ENCODE measurements at regions of chr11 and their contacts with region 1.

Region 1: GRCh38 chr11:7986768-7987559 is at the start of gene EIF3F:
- DNase-seq: peak; percentile 94
- H3K4me3 Mint-ChIP-seq: peak within 1 kb of the TSS; percentile 88
- H3K27ac Mint-ChIP-seq: peak within 1 kb of the TSS; percentile 92
- H3K4me1 Mint-ChIP-seq: peaks cover 37% of the 10 kb centered on the region
- H3K27me3 Mint-ChIP-seq: no peaks in the 10 kb centered on the region
- total RNA-seq, gene EIF3F: 365 to 380 TPM

Region 2: GRCh38 chr11:7098235-7098832 is 888.6 kb before region 1 on chr11:
- CTCF ChIA-PET with region 1: no interaction called
- intact Hi-C with region 1: loop called (anchors 2 kb)
- DNase-seq: no peak
- H3K4me3 Mint-ChIP-seq: no peak overlapping the region
- H3K27ac Mint-ChIP-seq: no peak overlapping the region
- H3K4me1 Mint-ChIP-seq: no peaks in the 10 kb centered on the region
- H3K27me3 Mint-ChIP-seq: peaks cover 11% of the 10 kb centered on the region

Region 3: GRCh38 chr11:7688238-7688826 is 298.6 kb before region 1 on chr11:
- CTCF ChIA-PET with region 1: interaction called, 3 read pairs
- intact Hi-C with region 1: loop called (anchors 5 kb)
- DNase-seq: peak; percentile 35
- H3K4me3 Mint-ChIP-seq: no peak overlapping the region
- H3K27ac Mint-ChIP-seq: no peak overlapping the region
- H3K4me1 Mint-ChIP-seq: peaks cover 6% of the 10 kb centered on the region
- H3K27me3 Mint-ChIP-seq: peaks cover 26% of the 10 kb centered on the region

Region 4: DNA sequence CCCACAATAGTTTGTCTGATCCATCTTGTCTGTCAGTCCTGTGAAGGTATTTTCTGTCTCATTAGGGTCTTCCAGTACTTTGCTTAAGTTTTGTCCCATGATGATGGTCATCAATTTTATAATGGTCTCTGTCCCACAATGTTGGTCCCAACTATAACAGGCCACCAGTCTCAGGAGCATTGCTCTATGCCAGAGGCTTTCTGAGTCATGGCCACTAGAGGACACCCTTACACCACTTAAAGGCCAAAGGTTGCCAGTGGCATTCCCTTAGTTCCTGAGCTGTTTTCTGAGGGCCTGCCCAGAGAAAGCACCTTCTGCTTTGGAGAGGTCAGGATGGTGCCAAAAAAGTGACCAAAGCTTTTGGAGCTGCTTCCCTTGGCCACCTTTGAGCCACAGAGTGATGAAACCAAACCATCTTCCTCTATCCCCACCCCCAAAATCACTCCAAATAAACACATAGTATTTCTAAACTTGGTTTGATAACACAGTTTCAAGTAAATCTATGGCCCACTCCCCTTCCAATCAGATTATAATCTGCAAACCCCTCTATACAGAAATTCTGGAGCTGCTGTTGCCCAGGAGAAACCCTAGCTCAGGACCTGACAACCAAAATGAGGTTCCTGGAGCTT is 19.5 kb after region 1 on chr11:
- CTCF ChIA-PET with region 1: interaction called, 12 read pairs
- intact Hi-C with region 1: no loop called
- DNase-seq: peak; percentile 63
- H3K4me3 Mint-ChIP-seq: no peak overlapping the region
- H3K27ac Mint-ChIP-seq: no peak overlapping the region
- H3K4me1 Mint-ChIP-seq: no peaks in the 10 kb centered on the region
- H3K27me3 Mint-ChIP-seq: no peaks in the 10 kb centered on the region

Region 5: GRCh38 chr11:8099291-8099899 is 112.4 kb after region 1 on chr11:
- CTCF ChIA-PET with region 1: interaction called, 10 read pairs
- intact Hi-C with region 1: no loop called
- DNase-seq: peak; percentile 88
- H3K4me3 Mint-ChIP-seq: no peak overlapping the region
- H3K27ac Mint-ChIP-seq: no peak overlapping the region
- H3K4me1 Mint-ChIP-seq: no peaks in the 10 kb centered on the region
- H3K27me3 Mint-ChIP-seq: no peaks in the 10 kb centered on the region

Region 6: GRCh38 chr11:8201644-8202365 is 214.8 kb after region 1 on chr11:
- CTCF ChIA-PET with region 1: no interaction called
- intact Hi-C with region 1: no loop called
- DNase-seq: no peak
- H3K4me3 Mint-ChIP-seq: no peak overlapping the region
- H3K27ac Mint-ChIP-seq: no peak overlapping the region
- H3K4me1 Mint-ChIP-seq: peaks cover 3% of the 10 kb centered on the region
- H3K27me3 Mint-ChIP-seq: peaks cover 31% of the 10 kb centered on the region

Region 7: GRCh38 chr11:8682303-8683114 is 695.5 kb after region 1 on chr11 and contains the starts of genes RPL27A and TRIM66:
- CTCF ChIA-PET with region 1: no interaction called
- intact Hi-C with region 1: loop called (anchors 1 kb)
- DNase-seq: peak; percentile 99
- H3K4me3 Mint-ChIP-seq: peak within 1 kb of the TSS; percentile 91
- H3K27ac Mint-ChIP-seq: peak within 1 kb of the TSS; percentile 92
- H3K4me1 Mint-ChIP-seq: peaks cover 42% of the 10 kb centered on the region
- H3K27me3 Mint-ChIP-seq: no peaks in the 10 kb centered on the region
- total RNA-seq, gene RPL27A: 1,157 to 1,188 TPM
- total RNA-seq, gene TRIM66: 16.4 to 19.1 TPM

Measured in activated naive CD4-positive, alpha-beta T cell treated with anti-CD3 and anti-CD28 coated beads for 36 hours (primary cell).